ENCODE measurements at regions of chr3 and their contacts with region 1.

Region 1: DNA sequence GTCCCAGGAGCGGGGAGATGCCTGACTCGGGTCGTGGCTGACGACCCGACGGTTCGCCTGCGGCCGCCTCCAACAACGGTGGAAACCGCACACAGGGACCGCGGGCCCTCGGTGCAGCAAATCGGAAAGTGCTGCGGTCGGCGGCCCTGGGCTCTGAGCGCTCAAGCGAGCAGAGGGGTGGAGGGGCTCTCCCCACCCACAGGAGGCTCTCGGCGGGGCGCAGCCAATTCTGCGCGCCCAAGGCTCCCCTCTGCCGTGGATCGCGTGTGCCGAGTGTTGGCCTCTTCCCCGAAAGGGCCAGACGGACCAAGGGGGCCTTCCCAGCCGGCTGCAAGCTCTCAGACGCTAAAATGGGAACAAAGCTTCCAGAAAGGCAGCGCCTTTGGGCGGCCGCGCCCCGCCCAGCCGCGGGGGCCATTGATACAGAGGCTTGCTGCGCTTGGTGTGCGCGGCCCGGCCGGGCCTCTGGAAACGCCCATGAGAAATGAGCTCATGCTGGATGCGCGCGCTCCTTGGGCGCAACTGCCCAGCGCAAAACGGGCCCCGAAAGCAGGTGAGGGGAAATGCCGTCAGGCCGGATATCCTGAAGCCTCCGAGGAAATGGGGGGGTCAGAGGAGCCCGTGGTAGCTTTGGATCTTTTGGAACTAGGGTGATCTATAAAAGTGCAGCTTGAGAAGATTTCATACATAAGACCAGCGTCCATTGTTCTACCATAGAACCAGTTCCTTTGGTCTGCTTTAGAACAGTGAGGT is 1.2 kb upstream of the GSK3B start:
- DNase-seq: peak; percentile 85 to 94 (median 87)
- H3K4me3 ChIP-seq: peak overlapping the region; percentile 37 to 83
- H3K4me3 Mint-ChIP-seq: peak overlapping the region in 1 of 8 donors; percentile 95
- H3K27ac ChIP-seq: peak overlapping the region; percentile 96
- H3K27ac Mint-ChIP-seq: peak overlapping the region in 1 of 7 donors; percentile 98
- H3K4me1 ChIP-seq: peaks cover 33% of the 10 kb centered on the region
- H3K4me1 Mint-ChIP-seq: peaks cover 12 to 42% (median 21%) of the 10 kb centered on the region in 4 donors
- H3K27me3 ChIP-seq: no peaks in the 10 kb centered on the region
- H3K27me3 Mint-ChIP-seq: peaks cover 0 to 2% of the 10 kb centered on the region in 2 donors

Region 2: DNA sequence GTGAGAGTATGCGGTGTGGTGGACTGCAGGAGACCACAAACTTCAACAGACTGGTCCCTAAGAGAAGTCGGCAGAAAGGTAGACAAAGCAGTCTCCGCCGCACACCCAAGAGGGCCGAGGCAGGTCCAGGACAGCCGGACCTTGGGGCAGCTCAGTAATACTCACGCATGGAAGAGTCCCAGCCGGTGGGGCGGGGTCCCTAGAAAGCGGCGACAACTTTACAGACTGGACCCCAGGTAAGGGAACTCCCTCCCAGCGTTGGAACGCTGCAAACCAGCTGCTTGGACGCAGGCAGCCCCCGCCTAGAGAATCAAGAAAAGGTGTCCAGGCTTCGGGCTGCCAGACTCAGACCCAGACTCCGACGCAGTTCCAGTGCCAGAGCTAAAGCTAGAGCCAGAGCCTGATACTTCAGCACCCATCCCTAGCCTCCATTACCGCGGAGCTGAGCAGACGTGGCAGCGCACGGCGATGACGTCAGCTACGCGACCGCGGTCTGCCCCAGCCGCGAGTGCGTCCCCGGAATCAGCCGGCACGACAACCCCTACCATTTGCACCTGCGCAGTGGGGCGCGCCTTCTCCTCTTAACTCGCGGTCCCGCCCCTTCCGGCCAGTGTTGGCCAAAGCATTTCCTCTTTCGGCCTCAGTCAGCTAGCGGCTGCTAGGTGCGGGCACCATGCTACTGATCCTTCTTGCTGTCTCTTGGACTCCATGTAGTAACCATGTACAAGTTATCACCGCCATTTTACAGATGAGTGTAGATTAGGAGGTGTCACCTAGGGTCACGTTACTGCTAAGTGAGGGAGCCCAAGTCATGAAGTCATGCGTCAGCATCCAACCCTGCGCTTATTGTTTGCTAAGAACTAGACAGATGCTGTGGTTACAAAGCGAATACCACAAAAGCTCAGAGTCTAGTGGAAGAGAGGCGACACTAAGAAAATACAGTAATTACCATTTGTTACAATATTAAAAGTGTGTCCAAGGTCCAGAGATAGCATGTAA is 631.9 kb before region 1 on chr3 and contains the start of gene TMEM39A:
- CTCF ChIA-PET with region 1: no interaction called
- POLR2A ChIA-PET with region 1: interaction called, 17 read pairs
- intact Hi-C with region 1: loop called (anchors 1 kb)
- DNase-seq: peak; percentile 98 to 99 (median 99)
- H3K4me3 ChIP-seq: peak within 1 kb of the TSS; percentile 91 to 98
- H3K4me3 Mint-ChIP-seq: peak within 1 kb of the TSS; percentile 93 to 97 (median 95)
- H3K27ac ChIP-seq: peak within 1 kb of the TSS; percentile 91
- H3K27ac Mint-ChIP-seq: peak within 1 kb of the TSS; percentile 98 to 99 (median 99)
- H3K4me1 ChIP-seq: peaks cover 33% of the 10 kb centered on the region
- H3K4me1 Mint-ChIP-seq: peaks cover 24 to 58% (median 38%) of the 10 kb centered on the region in 4 donors
- H3K27me3 ChIP-seq: no peaks in the 10 kb centered on the region
- H3K27me3 Mint-ChIP-seq: peaks cover 0 to 2% of the 10 kb centered on the region in 2 donors
- total RNA-seq, gene TMEM39A: 46.1 to 47.4 TPM

Region 3: GRCh38 chr3:119891944-119892721 is 203.3 kb before region 1 on chr3:
- CTCF ChIA-PET with region 1: interaction called, 6 read pairs
- POLR2A ChIA-PET with region 1: interaction called, 9 read pairs
- intact Hi-C with region 1: loop called (anchors 2 kb)
- DNase-seq: peak in 4 of 5 donors; percentile 55 to 62 (median 58)
- H3K4me3 ChIP-seq: no peak overlapping the region
- H3K4me3 Mint-ChIP-seq: no peak overlapping the region
- H3K27ac ChIP-seq: no peak overlapping the region
- H3K27ac Mint-ChIP-seq: peak overlapping the region in 2 of 7 donors; percentile 5 to 32
- H3K4me1 ChIP-seq: no peaks in the 10 kb centered on the region
- H3K4me1 Mint-ChIP-seq: peaks cover 11 to 17% (median 15%) of the 10 kb centered on the region in 4 donors
- H3K27me3 ChIP-seq: no peaks in the 10 kb centered on the region
- H3K27me3 Mint-ChIP-seq: no peaks in the 10 kb centered on the region

Region 4: DNA sequence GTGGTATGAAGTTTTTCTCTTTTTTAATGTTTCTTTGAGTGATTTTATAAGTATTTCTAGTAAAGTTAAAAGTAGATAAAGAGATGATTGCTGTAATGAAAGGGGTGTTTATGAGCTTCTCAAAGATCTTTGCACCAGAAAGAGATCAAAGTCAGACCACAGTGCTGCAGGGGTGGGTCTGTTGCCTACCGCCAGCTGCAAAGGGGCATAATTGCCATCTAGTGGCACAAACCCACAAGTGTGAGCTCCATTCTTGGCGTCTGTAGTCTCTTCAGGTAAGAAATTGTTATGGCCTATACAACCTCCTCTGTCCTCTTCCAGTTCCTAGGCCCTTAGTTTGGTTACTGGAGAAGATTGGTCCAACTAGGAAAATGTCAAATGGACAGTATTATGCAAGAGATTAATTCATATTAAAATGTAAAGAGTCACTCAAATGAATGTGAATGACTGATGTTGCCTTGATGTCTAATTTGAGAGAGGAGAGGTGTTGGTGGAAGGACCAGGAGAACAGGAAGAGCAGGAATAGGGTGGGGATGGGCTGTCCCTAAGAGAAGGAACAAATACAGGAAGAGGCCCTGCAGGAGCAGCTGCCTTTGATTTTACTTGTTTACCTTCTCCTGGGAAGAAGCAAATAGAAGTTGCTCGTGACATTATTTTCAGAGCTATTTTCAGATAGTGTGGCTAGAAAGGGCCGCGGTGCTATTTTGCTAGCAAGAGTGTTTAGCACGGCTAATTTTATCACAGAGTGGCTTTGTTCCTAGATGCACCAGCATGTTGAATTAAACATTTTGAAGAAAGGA is 51.9 kb after region 1 on chr3:
- CTCF ChIA-PET with region 1: interaction called, 8 read pairs
- POLR2A ChIA-PET with region 1: interaction called, 4 read pairs
- intact Hi-C with region 1: loop called (anchors 2 kb)
- DNase-seq: peak; percentile 47 to 60 (median 52)
- H3K4me3 ChIP-seq: no peak overlapping the region
- H3K4me3 Mint-ChIP-seq: no peak overlapping the region
- H3K27ac ChIP-seq: no peak overlapping the region
- H3K27ac Mint-ChIP-seq: peak overlapping the region in 1 of 7 donors; percentile 44
- H3K4me1 ChIP-seq: peaks cover 3% of the 10 kb centered on the region
- H3K4me1 Mint-ChIP-seq: peaks cover 4 to 13% (median 6%) of the 10 kb centered on the region in 4 donors
- H3K27me3 ChIP-seq: no peaks in the 10 kb centered on the region
- H3K27me3 Mint-ChIP-seq: no peaks in the 10 kb centered on the region

Region 5: GRCh38 chr3:120558771-120559241 is 463.4 kb after region 1 on chr3:
- CTCF ChIA-PET with region 1: no interaction called
- POLR2A ChIA-PET with region 1: no interaction called
- intact Hi-C with region 1: loop called (anchors 10 kb)
- DNase-seq: peak; percentile 85 to 91 (median 89)
- H3K4me3 ChIP-seq: peak overlapping the region in 1 of 2 donors; percentile 33
- H3K4me3 Mint-ChIP-seq: peak overlapping the region; percentile 74 to 88 (median 82)
- H3K27ac ChIP-seq: peak overlapping the region; percentile 36
- H3K27ac Mint-ChIP-seq: peak overlapping the region; percentile 69 to 96 (median 93)
- H3K4me1 ChIP-seq: peaks cover 11% of the 10 kb centered on the region
- H3K4me1 Mint-ChIP-seq: peaks cover 11 to 24% (median 13%) of the 10 kb centered on the region in 4 donors
- H3K27me3 ChIP-seq: no peaks in the 10 kb centered on the region
- H3K27me3 Mint-ChIP-seq: peaks cover 1% of the 10 kb centered on the region in 2 donors

Region 6: GRCh38 chr3:121749276-121750086 is 1654.1 kb after region 1 on chr3 and contains the start of gene GOLGB1:
- CTCF ChIA-PET with region 1: no interaction called
- POLR2A ChIA-PET with region 1: no interaction called
- intact Hi-C with region 1: loop called (anchors 10 kb)
- DNase-seq: peak; percentile 93 to 98 (median 97)
- H3K4me3 ChIP-seq: peak within 1 kb of the TSS; percentile 75 to 86
- H3K4me3 Mint-ChIP-seq: peak within 1 kb of the TSS in 2 of 8 donors; percentile 17 to 44
- H3K27ac ChIP-seq: peak within 1 kb of the TSS; percentile 99
- H3K27ac Mint-ChIP-seq: no peak within 1 kb of the TSS
- H3K4me1 ChIP-seq: peaks cover 34% of the 10 kb centered on the region
- H3K4me1 Mint-ChIP-seq: peaks cover 8 to 10% (median 9%) of the 10 kb centered on the region in 4 donors
- H3K27me3 ChIP-seq: no peaks in the 10 kb centered on the region
- H3K27me3 Mint-ChIP-seq: peaks cover 6 to 7% of the 10 kb centered on the region in 2 donors
- total RNA-seq, gene GOLGB1: 45.7 to 49.3 TPM

Measured in CD4-positive, alpha-beta memory T cell (primary cell).